GM23248 (cell line): ENCODE measurements at regions of chr17 and their contacts with region 1.

Region 1: GRCh38 chr17:20154286-20155000 is 145.3 kb downstream of the SPECC1 start:
- DNase-seq: no peak
- H3K4me3 ChIP-seq: no peak overlapping the region
- H3K27ac ChIP-seq: no peak overlapping the region
- H3K4me1 ChIP-seq: no peaks in the 10 kb centered on the region
- H3K27me3 ChIP-seq: peaks cover 16% of the 10 kb centered on the region

Region 2: DNA sequence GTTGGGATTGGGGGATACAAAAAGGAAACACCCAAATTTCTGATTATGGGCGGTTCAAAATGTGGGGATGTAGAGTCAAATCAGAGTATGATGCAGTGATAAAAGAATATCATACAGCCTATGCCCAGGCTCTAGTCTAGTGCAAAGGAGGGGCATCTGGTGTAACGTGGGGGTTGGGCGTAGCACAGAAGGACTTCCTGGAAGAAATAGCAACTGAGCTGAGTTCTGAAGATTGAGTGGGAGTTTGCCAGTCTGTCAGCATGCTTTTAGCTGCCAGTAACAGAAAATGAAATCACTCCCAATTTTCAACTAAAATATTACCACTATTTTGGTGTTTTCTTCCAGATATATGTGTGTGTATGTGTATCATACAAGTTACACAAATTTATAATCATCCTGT is 51.6 kb after region 1 on chr17:
- in situ Hi-C with region 1: loop called (anchors 5 kb)
- DNase-seq: peak; percentile 43
- H3K4me3 ChIP-seq: peak overlapping the region; percentile 1; the same call in 1 of the 2 replicates
- H3K27ac ChIP-seq: no peak overlapping the region
- H3K4me1 ChIP-seq: peaks cover 31% of the 10 kb centered on the region
- H3K27me3 ChIP-seq: peaks cover 3% of the 10 kb centered on the region; the same call in 1 of the 2 replicates